ENCODE measurements at regions of chr11 and their contacts with region 1.

Region 1: GRCh38 chr11:17207317-17208258 is at the start of gene PIK3C2A:
- DNase-seq: peak; percentile 94
- H3K4me3 ChIP-seq: peak within 1 kb of the TSS; percentile 62 to 90 (median 88)
- H3K27ac ChIP-seq: peak within 1 kb of the TSS; percentile 95
- H3K4me1 ChIP-seq: peaks cover 14% of the 10 kb centered on the region
- H3K27me3 ChIP-seq: no peaks in the 10 kb centered on the region
- CTCF ChIP-seq: no peak
- total RNA-seq, gene PIK3C2A: 57.7 to 59.3 TPM

Region 2: GRCh38 chr11:17077520-17078401 is 129.8 kb before region 1 on chr11 and contains the start of gene RPS13:
- CTCF ChIA-PET with region 1: no interaction called
- dilution Hi-C with region 1: no loop called
- in situ Hi-C with region 1: no loop called
- intact Hi-C with region 1: loop called (anchors 5 kb)
- DNase-seq: peak; percentile 99
- H3K4me3 ChIP-seq: peak within 1 kb of the TSS; percentile 69 to 89 (median 81)
- H3K27ac ChIP-seq: peak within 1 kb of the TSS; percentile 86
- H3K4me1 ChIP-seq: peaks cover 25% of the 10 kb centered on the region
- H3K27me3 ChIP-seq: no peaks in the 10 kb centered on the region
- CTCF ChIP-seq: no peak
- total RNA-seq, gene RPS13: 475 to 878 TPM